Transverse colon (tissue), 4 donors: ENCODE measurements at regions of chr20 and their contacts with region 1.

Region 1: DNA sequence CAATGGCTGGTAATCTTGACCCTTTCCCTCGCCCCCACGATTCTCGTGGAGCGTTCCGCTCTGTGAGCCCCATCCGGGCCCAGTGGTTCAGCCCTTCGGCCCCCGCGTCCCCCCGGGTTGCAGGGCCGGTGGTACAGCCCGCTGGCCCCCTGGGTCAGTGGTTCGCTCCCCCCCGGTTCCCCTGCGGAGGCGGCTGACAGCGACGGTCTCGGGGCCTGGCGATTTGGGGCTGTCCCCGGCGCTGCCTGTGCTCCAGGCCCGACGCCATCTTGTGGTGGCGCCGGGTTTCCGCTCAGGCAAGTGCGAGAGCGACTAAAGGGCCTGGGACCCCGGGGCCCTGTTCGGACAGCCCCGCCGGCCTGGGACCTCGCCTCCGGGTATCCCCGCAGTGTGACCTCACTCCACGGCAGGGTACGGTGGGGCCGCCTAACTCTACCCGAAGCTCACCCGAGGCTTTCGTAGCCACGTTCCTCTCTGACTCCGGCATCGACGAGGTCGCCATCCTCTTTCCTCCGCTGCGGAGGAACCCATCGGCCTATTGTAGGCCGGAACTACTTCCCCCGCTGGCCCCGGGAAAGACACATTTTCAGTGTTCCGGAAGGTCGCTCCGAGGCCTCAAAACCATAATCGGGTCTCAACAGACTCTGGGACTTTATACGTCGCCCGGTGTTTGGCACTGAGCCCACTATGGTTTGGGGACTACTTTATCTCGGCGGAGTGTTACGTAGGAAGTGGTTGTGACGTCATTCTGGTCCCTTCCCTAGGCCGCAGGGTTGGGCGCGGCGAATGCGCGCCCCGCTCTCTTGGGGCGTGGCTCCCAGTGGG is at the start of gene ZNF335:
- DNase-seq: peak; percentile 95
- H3K4me3 ChIP-seq: peak within 1 kb of the TSS; percentile 56 to 96 (median 82)
- H3K27ac ChIP-seq: peak within 1 kb of the TSS; percentile 94 to 97 (median 96)
- H3K4me1 ChIP-seq: peaks cover 18 to 24% (median 22%) of the 10 kb centered on the region in 4 donors
- H3K27me3 ChIP-seq: no peaks in the 10 kb centered on the region
- CTCF ChIP-seq: peak in 4 of 5 experiments; percentile 44 to 83 (median 66)
- EP300 ChIP-seq: no peak
- POLR2A ChIP-seq: peak; percentile 89
- total RNA-seq, gene ZNF335: 27.0 to 80.0 (median 32.4) TPM

Region 2: GRCh38 chr20:45812157-45813020 is 159.5 kb before region 1 on chr20 and contains the start of gene UBE2C:
- in situ Hi-C with region 1: loop called in 1 of 4 experiments (anchors 25 kb)
- intact Hi-C with region 1: no loop called
- DNase-seq: peak; percentile 97
- H3K4me3 ChIP-seq: peak within 1 kb of the TSS; percentile 28 to 84 (median 55)
- H3K27ac ChIP-seq: peak within 1 kb of the TSS; percentile 71 to 77 (median 74)
- H3K4me1 ChIP-seq: peaks cover 6 to 22% (median 15%) of the 10 kb centered on the region in 4 donors
- H3K27me3 ChIP-seq: no peaks in the 10 kb centered on the region
- CTCF ChIP-seq: no peak
- EP300 ChIP-seq: no peak
- POLR2A ChIP-seq: peak; percentile 35
- total RNA-seq, gene UBE2C: 2.7 to 27.1 (median 6.9) TPM

Region 3: DNA sequence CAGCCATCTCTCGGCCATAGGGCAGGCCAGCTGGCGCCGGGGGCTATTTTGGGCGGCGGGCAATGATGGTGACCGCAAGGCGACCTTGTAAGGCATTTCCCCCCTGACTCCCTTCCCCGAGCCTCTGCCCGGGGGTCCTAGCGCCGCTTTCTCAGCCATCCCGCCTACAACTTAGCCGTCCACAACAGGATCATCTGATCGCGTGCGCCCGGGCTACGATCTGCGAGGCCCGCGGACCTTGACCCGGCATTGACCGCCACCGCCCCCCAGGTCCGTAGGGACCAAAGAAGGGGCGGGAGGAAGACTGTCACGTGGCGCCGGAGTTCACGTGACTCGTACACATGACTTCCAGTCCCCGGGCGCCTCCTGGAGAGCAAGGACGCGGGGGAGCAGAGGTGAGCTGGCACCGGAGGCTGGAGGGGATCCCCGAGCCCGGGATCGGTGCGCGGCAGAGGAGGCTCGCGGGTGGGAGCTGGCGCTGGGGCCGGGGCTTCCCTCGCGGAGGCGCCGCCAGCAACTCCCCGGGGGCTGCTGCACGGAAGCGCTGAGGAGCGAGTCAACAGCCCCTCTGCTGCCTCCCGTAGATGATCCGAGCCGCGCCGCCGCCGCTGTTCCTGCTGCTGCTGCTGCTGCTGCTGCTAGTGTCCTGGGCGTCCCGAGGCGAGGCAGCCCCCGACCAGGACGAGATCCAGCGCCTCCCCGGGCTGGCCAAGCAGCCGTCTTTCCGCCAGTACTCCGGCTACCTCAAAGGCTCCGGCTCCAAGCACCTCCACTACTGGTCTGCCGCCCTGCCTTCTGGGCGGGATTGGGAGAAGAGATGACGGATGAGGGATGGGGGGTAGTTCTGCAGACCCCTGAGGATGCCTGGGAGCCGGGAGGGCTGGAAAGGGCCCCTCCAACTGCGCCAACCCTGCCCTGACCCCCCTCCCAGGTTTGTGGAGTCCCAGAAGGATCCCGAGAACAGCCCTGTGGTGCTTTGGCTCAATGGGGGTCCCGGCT is 80.6 kb before region 1 on chr20 and contains the starts of genes CTSA and NEURL2:
- in situ Hi-C with region 1: no loop called
- intact Hi-C with region 1: loop called (anchors 1 kb)
- DNase-seq: peak; percentile 97
- H3K4me3 ChIP-seq: peak within 1 kb of the TSS; percentile 70 to 84 (median 76)
- H3K27ac ChIP-seq: peak within 1 kb of the TSS; percentile 87 to 90 (median 88)
- H3K4me1 ChIP-seq: peaks cover 15 to 41% (median 32%) of the 10 kb centered on the region in 4 donors
- H3K27me3 ChIP-seq: no peaks in the 10 kb centered on the region
- CTCF ChIP-seq: peak in 1 of 5 experiments; percentile 8
- EP300 ChIP-seq: peak; percentile 58
- POLR2A ChIP-seq: peak; percentile 73
- total RNA-seq, gene CTSA: 197 to 971 (median 466) TPM
- total RNA-seq, gene NEURL2: 14.7 to 30.4 (median 18.1) TPM

Region 4: GRCh38 chr20:46139908-46140482 is 168.1 kb after region 1 on chr20:
- in situ Hi-C with region 1: no loop called
- intact Hi-C with region 1: no loop called
- DNase-seq: no peak
- H3K4me3 ChIP-seq: no peak overlapping the region
- H3K27ac ChIP-seq: no peak overlapping the region
- H3K4me1 ChIP-seq: no peaks in the 10 kb centered on the region
- H3K27me3 ChIP-seq: peaks cover 85% of the 10 kb centered on the region
- CTCF ChIP-seq: no peak
- EP300 ChIP-seq: no peak
- POLR2A ChIP-seq: no peak